ENCODE measurements at regions of chr3 and their contacts with region 1.

Region 1: DNA sequence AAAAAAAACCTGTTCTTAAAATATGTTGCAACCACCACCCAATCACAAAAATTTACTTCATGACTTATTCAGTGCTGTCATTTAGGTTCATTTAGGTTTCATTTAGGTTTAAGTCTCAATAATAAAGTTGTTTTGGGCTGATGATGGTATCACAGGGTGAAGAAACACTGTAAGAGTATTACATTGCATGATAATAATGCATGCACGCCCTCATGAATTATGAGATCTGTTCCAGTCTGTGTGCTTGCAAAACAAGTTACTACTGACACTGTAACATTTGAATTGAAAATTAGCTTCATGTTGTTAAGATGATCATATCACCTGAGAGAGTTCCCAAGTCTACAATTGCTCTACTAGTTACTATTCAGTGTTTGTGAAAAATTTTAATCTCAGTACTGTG is at the start of gene AADACL2:
- DNase-seq: no peak
- H3K4me3 ChIP-seq: no peak within 1 kb of the TSS
- H3K4me3 Mint-ChIP-seq: no peak within 1 kb of the TSS
- H3K27ac Mint-ChIP-seq: no peak within 1 kb of the TSS
- H3K4me1 ChIP-seq: no peaks in the 10 kb centered on the region; the same call in 1 of the 2 replicates
- H3K4me1 Mint-ChIP-seq: peaks cover 3% of the 10 kb centered on the region
- H3K27me3 ChIP-seq: no peaks in the 10 kb centered on the region
- H3K27me3 Mint-ChIP-seq: no peaks in the 10 kb centered on the region
- CTCF ChIP-seq: no peak
- total RNA-seq, gene AADACL2: not detected in 2 replicates

Region 2: DNA sequence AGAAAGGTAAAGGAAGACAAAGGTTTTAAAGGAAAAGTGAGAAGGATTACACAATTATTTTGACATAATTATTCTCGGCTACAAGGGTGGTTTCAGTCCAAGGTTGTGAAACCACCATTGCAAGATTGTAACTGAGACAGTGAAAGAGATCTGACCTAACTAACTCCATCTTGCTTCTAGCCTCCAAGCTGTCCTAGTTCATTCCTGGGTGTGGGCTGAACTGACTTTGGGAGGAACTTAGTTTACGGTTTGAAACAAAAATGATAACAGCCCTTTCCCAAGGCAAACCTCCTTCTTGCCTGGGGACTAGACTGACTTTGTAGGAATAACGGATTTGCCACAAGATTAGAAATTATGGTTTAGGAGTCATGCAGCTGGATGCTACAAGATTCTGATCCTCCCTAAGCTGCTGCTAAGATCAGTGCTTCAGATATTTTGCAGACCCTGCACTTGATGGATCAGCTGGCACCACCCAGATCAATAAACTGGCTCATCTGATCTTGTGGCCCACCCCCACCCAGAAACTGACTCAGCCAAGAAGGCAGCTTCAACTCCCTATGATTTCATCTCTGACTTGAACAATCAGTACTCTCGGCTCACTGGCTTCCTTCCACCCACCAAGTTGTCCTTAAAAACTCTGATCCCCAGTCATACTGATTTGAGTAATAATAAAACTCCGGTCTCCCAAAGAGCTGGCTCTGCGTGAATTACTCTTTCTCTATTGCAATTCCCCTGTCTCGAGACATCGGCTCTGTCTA is 57.6 kb before region 1 on chr3:
- CTCF ChIA-PET with region 1: no interaction called
- POLR2A ChIA-PET with region 1: interaction called, 10 read pairs
- intact Hi-C with region 1: no loop called
- DNase-seq: no peak
- H3K4me3 ChIP-seq: no peak overlapping the region
- H3K4me3 Mint-ChIP-seq: no peak overlapping the region
- H3K27ac Mint-ChIP-seq: no peak overlapping the region
- H3K4me1 ChIP-seq: no peaks in the 10 kb centered on the region
- H3K4me1 Mint-ChIP-seq: peaks cover 6% of the 10 kb centered on the region
- H3K27me3 ChIP-seq: no peaks in the 10 kb centered on the region
- H3K27me3 Mint-ChIP-seq: no peaks in the 10 kb centered on the region
- CTCF ChIP-seq: no peak